ENCODE measurements at regions of chr6 and their contacts with region 1.

Region 1: GRCh38 chr6:25085756-25086155 is 150.0 kb upstream of the RIPOR2 start:
- DNase-seq: no peak
- ATAC-seq: peak; percentile 82

Region 2: DNA sequence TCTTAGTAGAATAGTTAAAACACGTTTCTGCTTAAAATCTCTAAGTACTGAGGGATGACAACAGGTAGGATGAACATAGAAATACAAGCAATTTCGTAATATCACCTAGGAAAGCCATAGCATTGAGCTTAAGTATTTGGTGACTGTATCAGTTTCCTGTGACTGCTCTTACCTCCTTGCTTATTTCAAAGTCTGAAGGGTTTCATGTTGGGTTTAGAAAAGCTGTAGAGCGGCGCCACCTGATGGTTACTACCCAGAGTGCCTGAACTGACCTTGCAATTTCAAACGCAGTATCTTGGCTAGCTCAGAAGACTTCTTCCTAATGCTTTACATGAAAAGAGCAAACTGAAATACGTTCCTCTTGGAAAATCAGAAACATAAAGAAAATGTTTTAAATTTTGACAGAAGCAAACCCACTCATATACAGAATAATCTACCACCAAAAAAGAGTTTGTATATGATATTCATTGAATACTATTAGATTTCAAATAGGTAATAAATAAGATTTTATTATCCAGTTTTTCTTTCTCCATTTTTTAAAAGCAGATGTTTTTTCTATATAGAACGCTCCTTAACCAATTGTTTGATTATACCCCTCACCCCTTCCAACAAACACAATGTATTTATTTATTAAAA is 67.7 kb before region 1 on chr6:
- intact Hi-C with region 1: no loop called
- DNase-seq: peak; percentile 71
- ATAC-seq: peak; percentile 59

Region 3: GRCh38 chr6:25173951-25174474 is 88.3 kb after region 1 on chr6:
- intact Hi-C with region 1: loop called (anchors 10 kb)
- DNase-seq: no peak
- ATAC-seq: no peak